HAP-1 (cell line): ENCODE measurements at regions of chr11 and their contacts with region 1.

Region 1: GRCh38 chr11:12043959-12044819 is 35.8 kb upstream of the DKK3 start:
- DNase-seq: peak; percentile 68 to 83
- H3K4me3 ChIP-seq: no peak overlapping the region
- H3K4me1 ChIP-seq: no peaks in the 10 kb centered on the region
- H3K27me3 ChIP-seq: no peaks in the 10 kb centered on the region

Region 2: DNA sequence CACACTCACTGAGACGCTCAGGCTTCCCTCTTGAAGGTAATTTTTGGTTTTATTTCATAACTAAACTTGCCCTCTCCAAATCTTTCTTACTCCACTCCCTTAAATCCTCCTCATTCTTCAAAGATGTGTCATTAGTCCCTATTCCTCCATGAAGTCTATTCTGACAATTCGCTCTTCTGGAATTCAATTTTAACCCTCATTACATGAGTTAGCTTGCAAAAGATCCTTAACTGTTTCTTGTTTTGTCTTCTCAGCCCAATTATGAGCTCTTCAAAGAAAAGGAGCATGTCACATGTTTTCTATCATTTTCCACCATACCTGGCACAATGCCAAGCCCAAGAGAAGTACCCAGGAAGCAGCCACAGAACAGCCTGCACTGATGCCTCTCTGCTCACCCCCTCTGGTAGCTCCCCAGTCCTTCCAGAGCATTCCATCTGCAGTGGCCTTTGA is 435.4 kb before region 1 on chr11:
- in situ Hi-C with region 1: no loop called
- DNase-seq: peak; percentile 3 to 30
- H3K4me3 ChIP-seq: no peak overlapping the region
- H3K4me1 ChIP-seq: no peaks in the 10 kb centered on the region
- H3K27me3 ChIP-seq: no peaks in the 10 kb centered on the region

Region 3: GRCh38 chr11:11813288-11813962 is 230.8 kb before region 1 on chr11:
- in situ Hi-C with region 1: loop called (anchors 10 kb)
- DNase-seq: no peak
- H3K4me3 ChIP-seq: no peak overlapping the region
- H3K4me1 ChIP-seq: peaks cover 5% of the 10 kb centered on the region; the same call in 1 of the 2 replicates
- H3K27me3 ChIP-seq: peaks cover 10% of the 10 kb centered on the region

Region 4: DNA sequence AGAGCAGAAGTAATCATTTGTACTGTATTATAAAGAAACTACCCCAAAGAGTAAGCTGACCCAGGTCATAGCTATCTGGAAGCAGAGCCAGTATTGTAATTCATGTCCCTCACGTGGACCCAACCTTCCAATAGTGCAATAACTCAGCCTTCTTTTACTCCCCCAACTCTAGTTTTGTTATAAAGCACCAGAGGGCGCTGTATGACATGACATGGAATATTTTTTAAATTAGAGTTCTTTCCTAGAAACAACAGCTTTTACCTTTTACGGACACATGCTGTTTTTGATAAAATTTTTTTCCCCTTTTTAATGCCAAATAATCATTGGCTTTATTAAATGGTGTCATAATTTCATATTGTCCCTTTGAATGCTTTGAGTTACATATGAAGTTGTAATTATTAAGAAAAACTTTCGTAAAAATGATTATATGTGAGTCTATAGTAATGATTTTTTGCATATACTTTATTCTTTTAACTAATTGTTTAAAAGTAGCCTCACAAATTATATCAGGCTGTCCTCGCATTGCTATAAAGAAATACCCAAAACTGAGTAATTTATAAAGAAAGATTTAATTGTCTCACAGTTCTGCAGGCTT is 112.6 kb before region 1 on chr11:
- in situ Hi-C with region 1: loop called (anchors 5 kb)
- DNase-seq: peak; percentile 18 to 45
- H3K4me3 ChIP-seq: no peak overlapping the region
- H3K4me1 ChIP-seq: no peaks in the 10 kb centered on the region
- H3K27me3 ChIP-seq: no peaks in the 10 kb centered on the region

Region 5: GRCh38 chr11:12235947-12236743 is 192.0 kb after region 1 on chr11:
- in situ Hi-C with region 1: loop called (anchors 5 kb)
- DNase-seq: peak; percentile 13 to 64
- H3K4me3 ChIP-seq: no peak overlapping the region
- H3K4me1 ChIP-seq: no peaks in the 10 kb centered on the region
- H3K27me3 ChIP-seq: no peaks in the 10 kb centered on the region

Region 6: DNA sequence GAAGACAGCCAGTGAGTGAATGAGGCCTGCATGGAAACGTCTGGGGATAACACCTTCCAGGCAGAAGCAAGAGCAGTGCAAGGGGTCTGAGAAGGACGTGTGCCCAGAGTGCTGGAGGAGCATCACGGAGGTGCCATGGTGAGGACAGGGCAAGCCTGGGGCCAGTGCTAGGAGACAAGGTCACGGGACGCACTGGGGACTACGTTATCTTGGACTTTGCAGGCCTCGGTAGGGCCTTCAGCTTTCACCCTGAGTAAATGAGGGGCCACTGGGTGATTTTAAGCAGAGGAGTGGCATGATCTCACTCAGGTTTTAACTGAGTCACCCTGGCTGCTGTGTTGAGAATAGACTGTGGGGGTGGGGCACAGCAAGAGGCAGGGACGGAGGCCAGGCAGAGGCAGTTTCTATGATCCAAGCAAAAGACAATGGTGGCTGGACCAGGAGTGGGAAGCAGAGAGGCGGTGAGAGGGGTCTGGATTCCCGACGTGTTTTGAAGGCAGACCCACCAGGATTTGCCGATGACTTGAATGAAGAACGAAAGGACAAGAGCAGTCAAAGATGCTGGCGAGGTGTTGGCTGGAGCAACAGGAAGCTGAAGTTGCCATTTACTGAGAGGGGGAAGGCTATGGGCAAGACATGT is 230.5 kb after region 1 on chr11:
- in situ Hi-C with region 1: loop called (anchors 5 kb)
- DNase-seq: no peak
- H3K4me3 ChIP-seq: no peak overlapping the region
- H3K4me1 ChIP-seq: no peaks in the 10 kb centered on the region
- H3K27me3 ChIP-seq: no peaks in the 10 kb centered on the region